MCF 10A (cell line): ENCODE measurements at regions of chr15 and their contacts with region 1.

Region 1: DNA sequence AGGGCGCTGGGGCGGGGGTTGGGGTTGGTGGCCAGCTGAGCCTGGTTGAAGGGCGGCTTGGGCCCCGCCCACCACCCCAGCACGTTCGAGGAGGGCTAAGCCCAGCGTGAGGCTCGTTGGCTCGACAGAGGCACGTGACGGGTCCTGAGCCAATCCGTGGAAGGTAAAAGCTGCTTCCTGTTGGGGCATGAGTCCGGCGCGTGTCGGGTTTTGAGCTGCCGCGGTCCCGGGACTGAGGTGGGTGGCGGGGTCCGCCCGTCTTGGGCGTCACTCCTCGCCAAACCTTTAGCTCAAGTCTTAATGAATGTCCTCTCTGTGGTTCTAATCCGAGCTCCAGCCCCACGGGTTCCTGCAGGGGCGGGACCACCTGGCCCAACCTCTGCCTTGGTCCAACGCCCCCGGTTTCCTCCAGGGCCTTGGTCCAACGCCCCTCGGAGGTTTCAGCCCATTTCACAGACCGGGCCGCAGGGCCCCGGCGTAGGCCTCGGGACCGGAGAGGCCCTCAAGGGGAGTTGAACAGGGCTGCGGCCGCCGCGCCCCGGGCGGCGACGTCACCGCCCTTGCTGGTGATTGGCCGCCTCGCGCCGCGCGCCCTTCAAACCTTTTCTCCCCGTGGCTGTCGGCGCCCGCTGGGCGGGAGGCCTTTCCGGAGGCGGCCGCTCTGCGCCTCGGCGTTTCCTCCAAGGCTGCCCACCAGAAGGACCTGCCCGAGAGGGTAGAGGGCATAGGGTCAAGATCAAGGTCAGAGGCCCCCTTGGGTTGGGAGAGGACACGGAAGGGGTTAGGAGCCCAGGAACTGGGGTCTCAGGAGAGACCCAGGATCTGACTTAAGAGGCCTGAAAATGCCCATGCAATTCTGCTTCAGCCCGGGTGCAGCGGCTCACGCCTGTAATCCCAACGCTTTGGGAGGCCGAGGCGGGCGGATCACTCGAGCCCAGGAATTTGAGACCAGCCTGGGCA is at the start of gene RCCD1:
- DNase-seq: peak; percentile 97
- H3K4me3 Mint-ChIP-seq: peak within 1 kb of the TSS; percentile 77
- H3K27ac Mint-ChIP-seq: peak within 1 kb of the TSS; percentile 84
- H3K4me1 Mint-ChIP-seq: peaks cover 10% of the 10 kb centered on the region
- H3K27me3 Mint-ChIP-seq: no peaks in the 10 kb centered on the region
- CTCF ChIP-seq: no peak
- total RNA-seq, gene RCCD1: 21.5 and 29.0 TPM in 2 replicates

Region 2: DNA sequence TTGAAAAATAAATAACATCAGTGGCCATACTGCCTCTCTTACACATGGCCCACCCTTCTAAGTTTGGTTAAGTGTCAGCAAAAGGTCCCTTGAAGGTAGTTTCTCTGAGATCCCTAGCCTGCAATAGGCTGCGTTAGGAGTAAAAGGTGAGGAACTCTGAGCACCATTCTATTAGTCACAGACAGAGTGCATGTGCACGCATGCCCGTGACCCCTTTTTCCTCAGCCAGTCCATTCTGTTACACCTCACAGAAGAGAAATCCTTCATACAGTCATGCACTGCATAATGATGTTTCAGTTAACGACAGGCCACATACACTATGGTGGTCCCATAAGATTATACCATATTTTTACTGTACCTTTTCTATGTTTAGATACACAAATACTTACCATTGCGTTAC is 12.2 kb after region 1 on chr15:
- CTCF ChIA-PET with region 1: interaction called, 36 read pairs
- POLR2A ChIA-PET with region 1: interaction called, 8 read pairs
- intact Hi-C with region 1: no loop called
- DNase-seq: no peak
- H3K4me3 Mint-ChIP-seq: no peak overlapping the region
- H3K27ac Mint-ChIP-seq: no peak overlapping the region
- H3K4me1 Mint-ChIP-seq: peaks cover 5% of the 10 kb centered on the region
- H3K27me3 Mint-ChIP-seq: no peaks in the 10 kb centered on the region
- CTCF ChIP-seq: no peak

Region 3: GRCh38 chr15:90994417-90995311 is 39.7 kb after region 1 on chr15 and contains the start of gene PRC1:
- CTCF ChIA-PET with region 1: interaction called, 65 read pairs
- POLR2A ChIA-PET with region 1: interaction called, 13 read pairs
- intact Hi-C with region 1: loop called (anchors 2 kb)
- DNase-seq: peak; percentile 99
- H3K4me3 Mint-ChIP-seq: peak within 1 kb of the TSS; percentile 88
- H3K27ac Mint-ChIP-seq: peak within 1 kb of the TSS; percentile 98
- H3K4me1 Mint-ChIP-seq: peaks cover 9% of the 10 kb centered on the region
- H3K27me3 Mint-ChIP-seq: no peaks in the 10 kb centered on the region
- CTCF ChIP-seq: no peak
- total RNA-seq, gene PRC1: 83.1 and 125 TPM in 2 replicates

Region 4: DNA sequence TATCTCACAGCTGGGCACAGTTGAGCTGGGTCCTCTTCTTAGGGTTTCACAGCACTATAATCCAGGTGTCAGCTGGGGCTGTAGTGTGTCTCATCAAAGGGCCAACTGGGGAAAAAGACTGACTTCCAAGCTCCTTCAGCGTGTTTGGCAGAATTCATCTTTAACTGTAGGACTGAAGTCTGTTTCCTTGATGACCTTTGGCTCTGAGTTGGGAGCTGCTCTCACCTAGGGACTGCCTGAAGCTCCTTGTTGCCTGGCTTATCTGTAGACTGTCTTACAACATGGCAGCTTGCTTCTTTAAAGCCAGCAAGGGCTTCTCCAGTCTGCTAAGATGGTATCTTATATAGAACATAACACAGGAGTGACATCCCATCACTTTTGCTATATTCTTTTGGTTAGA is 72.7 kb after region 1 on chr15:
- CTCF ChIA-PET with region 1: interaction called, 41 read pairs
- POLR2A ChIA-PET with region 1: interaction called, 20 read pairs
- intact Hi-C with region 1: no loop called
- DNase-seq: no peak
- H3K4me3 Mint-ChIP-seq: no peak overlapping the region
- H3K27ac Mint-ChIP-seq: no peak overlapping the region
- H3K4me1 Mint-ChIP-seq: no peaks in the 10 kb centered on the region
- H3K27me3 Mint-ChIP-seq: no peaks in the 10 kb centered on the region
- CTCF ChIP-seq: no peak

Region 5: DNA sequence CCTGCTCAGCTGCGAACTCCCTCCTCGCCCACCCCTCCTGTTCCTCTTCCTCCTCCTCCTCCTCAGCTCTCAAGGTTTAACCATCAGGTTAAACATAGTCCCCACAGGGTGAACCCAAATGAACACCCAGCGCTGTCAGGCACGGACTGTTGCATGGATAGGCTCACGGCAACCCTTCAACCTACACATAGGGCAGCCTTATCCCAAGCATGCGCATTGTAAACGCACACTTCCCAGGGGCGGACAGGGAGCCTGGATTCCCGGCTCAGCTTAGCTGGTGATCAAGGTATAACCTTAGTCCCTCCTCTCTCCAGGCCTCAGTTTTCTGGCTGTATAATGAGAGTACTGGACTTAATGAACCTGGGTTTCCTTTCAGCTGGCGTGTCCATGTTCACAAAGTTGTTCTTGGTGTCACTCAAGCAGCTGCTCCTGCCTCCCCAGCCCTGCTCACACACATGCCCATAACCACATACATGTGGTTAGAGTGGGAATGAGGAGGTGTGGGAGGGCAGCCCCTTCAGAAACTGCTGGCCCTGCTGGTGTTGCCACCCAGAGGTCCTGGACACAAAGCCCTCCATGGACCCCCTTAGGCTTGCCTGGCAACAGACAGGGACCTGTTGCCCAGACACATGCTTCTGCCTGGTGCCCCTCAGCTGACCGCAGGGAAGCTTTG is 88.3 kb after region 1 on chr15:
- CTCF ChIA-PET with region 1: interaction called, 105 read pairs
- POLR2A ChIA-PET with region 1: interaction called, 14 read pairs
- intact Hi-C with region 1: no loop called
- DNase-seq: no peak
- H3K4me3 Mint-ChIP-seq: no peak overlapping the region
- H3K27ac Mint-ChIP-seq: no peak overlapping the region
- H3K4me1 Mint-ChIP-seq: no peaks in the 10 kb centered on the region
- H3K27me3 Mint-ChIP-seq: peaks cover 7% of the 10 kb centered on the region
- CTCF ChIP-seq: no peak

Region 6: DNA sequence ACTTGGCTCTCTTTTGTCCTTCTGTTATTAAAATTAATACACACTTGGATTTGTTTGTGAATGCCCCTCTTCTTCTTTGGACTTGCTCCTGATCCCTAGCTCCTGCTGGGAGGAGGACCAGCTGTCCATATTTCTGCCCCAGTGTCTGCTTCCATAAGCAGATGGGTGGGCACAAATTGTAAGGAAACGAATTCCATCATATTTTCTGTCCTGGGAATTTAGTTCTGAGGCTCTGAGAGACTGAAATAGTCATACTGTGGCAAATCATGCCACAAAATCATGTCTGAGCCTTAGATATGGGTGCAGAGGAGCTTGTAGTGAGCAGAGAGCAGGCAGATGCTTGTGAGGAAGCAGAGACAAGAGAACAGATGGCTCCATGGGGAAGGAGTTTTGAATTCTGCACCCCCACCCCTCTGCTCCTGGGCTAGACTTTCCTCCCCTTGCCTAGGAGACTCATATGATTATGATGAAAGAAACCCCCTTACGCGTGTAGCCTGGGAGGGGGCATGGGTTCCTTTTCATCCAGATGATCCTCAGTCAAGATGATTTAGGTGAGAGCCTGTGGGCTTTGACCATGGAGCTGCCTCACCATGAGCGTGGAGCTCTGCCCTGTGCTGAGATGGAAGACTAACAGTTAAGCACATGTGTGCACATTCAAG is 195.6 kb after region 1 on chr15:
- CTCF ChIA-PET with region 1: no interaction called
- POLR2A ChIA-PET with region 1: no interaction called
- intact Hi-C with region 1: no loop called
- DNase-seq: no peak
- H3K4me3 Mint-ChIP-seq: no peak overlapping the region
- H3K27ac Mint-ChIP-seq: no peak overlapping the region
- H3K4me1 Mint-ChIP-seq: no peaks in the 10 kb centered on the region
- H3K27me3 Mint-ChIP-seq: peaks cover 38% of the 10 kb centered on the region
- CTCF ChIP-seq: no peak

Region 7: GRCh38 chr15:91271565-91272153 is 316.7 kb after region 1 on chr15:
- CTCF ChIA-PET with region 1: interaction called, 21 read pairs
- POLR2A ChIA-PET with region 1: interaction called, 3 read pairs
- intact Hi-C with region 1: no loop called
- DNase-seq: peak; percentile 69
- H3K4me3 Mint-ChIP-seq: no peak overlapping the region
- H3K27ac Mint-ChIP-seq: no peak overlapping the region
- H3K4me1 Mint-ChIP-seq: peaks cover 9% of the 10 kb centered on the region
- H3K27me3 Mint-ChIP-seq: peaks cover 44% of the 10 kb centered on the region
- CTCF ChIP-seq: peak; percentile 85